ENCODE measurements at regions of chr6 and their contacts with region 1.

Region 1: GRCh38 chr6:7725849-7726415 is at the start of gene BMP6:
- DNase-seq: peak; percentile 93
- H3K4me3 Mint-ChIP-seq: peak within 1 kb of the TSS; percentile 87
- H3K27ac Mint-ChIP-seq: no peak within 1 kb of the TSS
- H3K4me1 Mint-ChIP-seq: peaks cover 17% of the 10 kb centered on the region
- H3K27me3 Mint-ChIP-seq: peaks cover 72% of the 10 kb centered on the region
- total RNA-seq, gene BMP6: 0.50 and 0.56 TPM in 2 replicates

Region 2: DNA sequence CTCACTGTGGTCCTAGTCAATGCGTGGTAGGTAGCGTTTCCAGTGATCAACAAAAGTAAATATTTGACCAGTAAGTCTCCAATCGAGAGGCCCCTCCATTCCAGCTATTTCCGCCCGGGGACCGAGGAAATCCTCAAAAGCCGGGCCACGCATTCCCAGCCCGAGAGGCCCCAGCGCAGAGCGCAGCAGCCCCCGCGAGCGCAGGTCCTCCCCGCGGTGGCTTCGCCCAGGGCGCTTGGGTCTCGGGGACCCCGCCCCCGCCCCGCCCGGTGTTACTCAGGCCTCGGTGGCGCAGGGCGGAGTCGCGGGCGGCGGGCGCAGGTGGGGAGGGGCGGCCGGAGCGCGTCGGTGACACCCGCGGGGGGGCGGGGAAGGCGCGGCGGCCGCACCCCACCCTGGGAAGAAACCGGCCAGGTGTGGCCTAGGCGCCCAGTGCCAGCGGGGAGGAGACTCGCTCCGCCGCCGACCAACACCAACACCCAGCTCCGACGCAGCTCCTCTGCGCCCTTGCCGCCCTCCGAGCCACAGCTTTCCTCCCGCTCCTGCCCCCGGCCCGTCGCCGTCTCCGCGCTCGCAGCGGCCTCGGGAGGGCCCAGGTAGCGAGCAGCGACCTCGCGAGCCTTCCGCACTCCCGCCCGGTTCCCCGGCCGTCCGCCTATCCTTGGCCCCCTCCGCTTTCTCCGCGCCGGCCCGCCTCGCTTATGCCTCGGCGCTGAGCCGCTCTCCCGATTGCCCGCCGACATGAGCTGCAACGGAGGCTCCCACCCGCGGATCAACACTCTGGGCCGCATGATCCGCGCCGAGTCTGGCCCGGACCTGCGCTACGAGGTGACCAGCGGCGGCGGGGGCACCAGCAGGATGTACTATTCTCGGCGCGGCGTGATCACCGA is 184.5 kb before region 1 on chr6 and contains the start of gene DSP:
- intact Hi-C with region 1: loop called (anchors 10 kb)
- DNase-seq: peak; percentile 75
- H3K4me3 Mint-ChIP-seq: peak within 1 kb of the TSS; percentile 86
- H3K27ac Mint-ChIP-seq: no peak within 1 kb of the TSS
- H3K4me1 Mint-ChIP-seq: peaks cover 11% of the 10 kb centered on the region
- H3K27me3 Mint-ChIP-seq: peaks cover 77% of the 10 kb centered on the region
- total RNA-seq, gene DSP: 0.02 TPM in 1 of 2 replicates, not detected in the other

Region 3: DNA sequence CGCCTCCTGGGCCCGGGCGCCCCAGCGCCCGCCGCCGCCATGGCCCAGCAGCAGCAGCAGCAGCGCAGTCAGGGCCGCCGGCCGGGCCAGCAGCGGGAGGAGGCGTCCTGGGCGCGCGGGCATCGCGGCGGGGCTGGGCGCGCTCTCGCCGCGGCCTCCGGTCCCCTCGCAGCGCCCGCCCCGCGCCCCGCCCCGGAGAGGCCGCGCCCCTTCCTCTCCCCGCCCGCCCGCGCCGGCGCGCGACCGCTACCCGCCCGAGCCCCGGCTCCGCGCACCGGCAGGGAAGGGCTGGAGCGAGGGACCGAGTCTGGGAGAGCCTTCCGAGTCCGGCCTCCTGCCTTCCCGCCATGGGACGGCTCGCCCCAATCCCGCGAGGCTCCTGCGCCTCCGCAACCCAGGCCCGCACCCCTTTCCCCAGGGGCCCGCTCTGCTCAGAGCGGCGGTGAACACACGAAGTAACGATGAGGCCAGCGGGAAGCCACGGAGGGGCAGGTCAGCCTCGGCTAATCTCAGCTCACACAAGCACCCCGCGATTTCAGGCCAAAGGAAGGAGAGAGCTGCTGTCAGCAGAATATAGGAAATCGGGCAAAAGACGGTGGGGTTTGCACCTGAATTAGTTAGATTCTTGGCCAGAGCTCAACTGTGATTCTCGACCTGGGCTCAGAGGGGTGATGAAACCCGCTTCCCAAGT is 184.9 kb after region 1 on chr6 and contains the start of gene TXNDC5:
- intact Hi-C with region 1: loop called (anchors 2 kb)
- DNase-seq: peak; percentile 93
- H3K4me3 Mint-ChIP-seq: peak within 1 kb of the TSS; percentile 92
- H3K27ac Mint-ChIP-seq: peak within 1 kb of the TSS; percentile 81
- H3K4me1 Mint-ChIP-seq: peaks cover 17% of the 10 kb centered on the region
- H3K27me3 Mint-ChIP-seq: no peaks in the 10 kb centered on the region
- total RNA-seq, gene TXNDC5: 111 and 112 TPM in 2 replicates

Region 4: GRCh38 chr6:8006208-8006607 is 280.3 kb after region 1 on chr6:
- intact Hi-C with region 1: loop called (anchors 1 kb)
- DNase-seq: peak; percentile 63
- H3K4me3 Mint-ChIP-seq: no peak overlapping the region
- H3K27ac Mint-ChIP-seq: no peak overlapping the region
- H3K4me1 Mint-ChIP-seq: peaks cover 3% of the 10 kb centered on the region
- H3K27me3 Mint-ChIP-seq: no peaks in the 10 kb centered on the region